Mammary epithelial cell (primary cell): ENCODE measurements at regions of chr10 and their contacts with region 1.

Region 1: GRCh38 chr10:59465088-59465487 is 102.7 kb upstream of the FAM13C start:
- DNase-seq: peak; percentile 27
- H3K4me3 ChIP-seq: no peak overlapping the region
- H3K27ac ChIP-seq: no peak overlapping the region
- H3K4me1 ChIP-seq: no peaks in the 10 kb centered on the region
- H3K27me3 ChIP-seq: no peaks in the 10 kb centered on the region
- CTCF ChIP-seq: peak; percentile 18 to 62

Region 2: DNA sequence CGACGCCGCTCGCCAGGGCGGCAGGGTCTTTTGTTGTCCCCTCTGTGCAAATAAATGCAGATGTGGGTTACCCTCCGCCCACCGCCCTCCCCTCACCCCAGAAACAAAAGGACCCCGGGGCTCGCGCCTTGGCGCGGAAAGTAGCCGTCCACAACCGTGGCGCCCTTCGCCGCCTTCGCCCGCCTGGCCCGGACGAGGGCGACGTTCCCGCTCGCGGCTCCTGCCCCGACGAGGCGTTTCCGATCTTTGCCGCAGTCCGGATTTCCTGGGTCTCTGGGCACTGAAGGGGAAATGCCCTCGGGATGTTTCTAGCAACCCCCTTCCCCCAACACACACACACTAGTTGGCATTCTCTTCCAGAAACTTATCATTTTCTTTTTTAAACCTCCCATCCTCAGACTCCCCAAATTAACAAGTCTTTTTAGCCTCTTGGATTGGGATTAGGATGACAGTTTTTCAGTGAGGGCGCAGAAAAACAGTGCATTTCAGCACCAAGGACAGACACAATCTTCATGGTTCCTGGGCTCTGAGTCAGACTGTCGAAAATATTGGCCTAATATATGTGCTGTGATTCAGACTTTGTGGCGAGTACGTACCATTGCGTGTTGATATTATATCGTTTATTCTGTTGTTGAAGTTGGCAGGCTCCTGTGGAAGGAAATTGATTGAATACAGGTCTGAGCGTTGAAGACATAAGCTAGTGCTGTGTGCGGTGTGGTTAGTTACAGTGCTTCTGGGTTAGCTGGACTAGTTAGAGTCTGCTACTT is 287.9 kb before region 1 on chr10:
- CTCF ChIA-PET with region 1: no interaction called
- dilution Hi-C with region 1: no loop called
- in situ Hi-C with region 1: no loop called
- intact Hi-C with region 1: no loop called
- DNase-seq: peak; percentile 79
- H3K4me3 ChIP-seq: peak overlapping the region in 2 of 3 experiments; percentile 40 to 44
- H3K27ac ChIP-seq: no peak overlapping the region
- H3K4me1 ChIP-seq: peaks cover 33% of the 10 kb centered on the region
- H3K27me3 ChIP-seq: peaks cover 5% of the 10 kb centered on the region
- CTCF ChIP-seq: no peak

Region 3: DNA sequence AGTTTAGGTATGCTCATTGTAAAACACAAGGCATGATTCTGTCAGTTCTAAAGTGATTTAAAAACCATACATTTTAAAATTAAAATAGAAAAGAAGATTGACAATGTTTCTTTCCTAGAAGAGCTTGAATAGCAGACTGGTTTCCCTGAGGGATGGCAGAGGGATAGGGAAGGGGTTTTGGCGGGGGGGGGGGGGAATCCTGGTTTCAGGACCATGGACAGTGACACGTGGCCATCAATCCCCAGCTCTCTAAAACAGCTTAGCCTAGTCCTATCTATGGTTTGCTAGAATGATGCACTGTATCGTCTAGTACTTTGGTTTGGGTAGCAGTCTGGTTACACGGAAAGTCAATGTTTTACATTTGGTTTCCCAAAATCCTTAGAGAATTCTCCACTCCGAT is 199.9 kb before region 1 on chr10:
- CTCF ChIA-PET with region 1: no interaction called
- dilution Hi-C with region 1: no loop called
- in situ Hi-C with region 1: loop called in 1 of 2 experiments (anchors 25 kb)
- intact Hi-C with region 1: no loop called
- DNase-seq: no peak
- H3K4me3 ChIP-seq: no peak overlapping the region
- H3K27ac ChIP-seq: no peak overlapping the region
- H3K4me1 ChIP-seq: no peaks in the 10 kb centered on the region
- H3K27me3 ChIP-seq: no peaks in the 10 kb centered on the region
- CTCF ChIP-seq: no peak

Region 4: DNA sequence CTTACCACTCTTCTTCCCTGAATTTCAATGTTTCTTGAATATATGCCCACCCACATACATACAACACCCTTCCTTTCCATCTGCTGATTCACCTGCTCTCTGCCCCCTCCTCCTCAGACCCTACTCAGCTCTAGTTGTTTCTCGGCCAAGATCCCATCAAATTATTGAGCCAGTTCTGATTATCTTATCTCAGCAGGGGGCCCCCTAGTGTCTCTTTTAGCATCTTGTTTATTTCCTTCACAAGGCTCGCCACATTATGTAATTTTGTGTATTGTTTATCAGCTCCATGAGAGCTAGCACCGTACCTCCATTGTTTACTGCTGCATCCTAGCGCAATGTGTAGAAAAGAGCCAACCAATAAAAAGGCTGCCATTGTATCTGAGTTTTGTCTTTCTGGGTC is 174.6 kb before region 1 on chr10:
- CTCF ChIA-PET with region 1: no interaction called
- dilution Hi-C with region 1: no loop called
- in situ Hi-C with region 1: no loop called
- intact Hi-C with region 1: loop called (anchors 2 kb)
- DNase-seq: no peak
- H3K4me3 ChIP-seq: no peak overlapping the region
- H3K27ac ChIP-seq: no peak overlapping the region
- H3K4me1 ChIP-seq: peaks cover 7% of the 10 kb centered on the region
- H3K27me3 ChIP-seq: no peaks in the 10 kb centered on the region
- CTCF ChIP-seq: peak; percentile 9 to 29

Region 5: GRCh38 chr10:59382831-59383295 is 82.2 kb before region 1 on chr10:
- CTCF ChIA-PET with region 1: no interaction called
- dilution Hi-C with region 1: no loop called
- in situ Hi-C with region 1: no loop called
- intact Hi-C with region 1: no loop called
- DNase-seq: no peak
- H3K4me3 ChIP-seq: no peak overlapping the region
- H3K27ac ChIP-seq: no peak overlapping the region
- H3K4me1 ChIP-seq: peaks cover 7% of the 10 kb centered on the region
- H3K27me3 ChIP-seq: no peaks in the 10 kb centered on the region
- CTCF ChIP-seq: no peak

Region 6: GRCh38 chr10:59580026-59580863 is 115.2 kb after region 1 on chr10:
- CTCF ChIA-PET with region 1: no interaction called
- dilution Hi-C with region 1: no loop called
- in situ Hi-C with region 1: no loop called
- intact Hi-C with region 1: loop called (anchors 1 kb)
- DNase-seq: no peak
- H3K4me3 ChIP-seq: no peak overlapping the region
- H3K27ac ChIP-seq: no peak overlapping the region
- H3K4me1 ChIP-seq: peaks cover 4% of the 10 kb centered on the region
- H3K27me3 ChIP-seq: no peaks in the 10 kb centered on the region
- CTCF ChIP-seq: peak; percentile 43 to 62